HepG2 (cell line): ENCODE measurements at regions of chr2 and their contacts with region 1.

Region 1: DNA sequence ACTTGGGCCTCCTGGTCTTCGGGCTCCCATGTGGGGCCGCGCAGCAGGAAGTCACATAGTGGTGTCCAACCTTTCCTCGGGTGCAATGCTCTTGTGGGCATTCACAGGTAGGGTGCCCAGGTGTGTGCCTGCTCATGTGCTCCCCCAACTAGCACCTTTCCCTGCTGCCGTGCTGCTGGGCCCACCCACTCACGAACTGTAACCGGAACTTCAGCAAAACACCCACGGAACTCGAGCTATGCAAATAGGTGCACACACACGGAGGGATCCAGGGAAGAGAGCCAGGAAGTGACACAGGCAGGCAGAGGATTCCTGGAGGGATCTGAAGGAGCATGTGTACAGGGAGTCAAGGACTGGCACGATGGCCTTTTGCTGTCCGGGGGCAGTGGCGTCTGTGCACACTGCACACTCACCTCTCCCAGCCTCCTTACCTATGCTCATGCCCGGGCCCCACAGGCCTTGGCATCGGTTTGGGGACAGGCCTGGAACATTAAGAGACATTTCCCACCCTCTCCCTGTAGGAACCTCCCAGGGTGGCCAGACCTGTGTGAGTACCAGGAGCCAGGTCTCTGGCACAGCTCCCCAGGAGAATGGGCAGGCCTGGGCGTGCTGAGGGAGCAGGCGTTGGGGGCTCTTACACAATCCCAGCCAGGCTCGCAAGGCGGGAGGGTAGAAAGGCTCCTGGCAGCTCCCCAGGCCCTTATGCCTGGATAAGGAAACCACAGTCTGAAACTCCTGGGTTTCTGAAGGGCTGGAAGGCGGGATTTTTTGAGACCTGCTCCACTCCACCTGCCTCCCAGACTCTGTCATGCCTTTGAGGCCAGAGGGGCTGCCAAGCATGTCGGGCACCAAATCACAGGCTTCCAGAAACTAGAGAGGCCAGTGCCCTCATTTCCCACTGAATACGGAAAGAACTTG is 6.6 kb upstream of the PTMA start:
- DNase-seq: peak; percentile 45
- ATAC-seq: peak; percentile 56
- H3K4me3 ChIP-seq: peak overlapping the region; percentile 32 to 67 (median 33)
- H3K27ac ChIP-seq: peak overlapping the region; percentile 28
- H3K4me1 ChIP-seq: peaks cover 53% of the 10 kb centered on the region
- H3K27me3 ChIP-seq: no peaks in the 10 kb centered on the region
- CTCF ChIP-seq: no peak; the same call in 1 of the 2 replicates
- EP300 ChIP-seq: no peak
- POLR2A ChIP-seq: 0 out of 4 replicates have a peak, but pooled peaks of 1 of the 2 experiments have one; percentile 36
- RAD21 ChIP-seq: no peak

Region 2: GRCh38 chr2:231680992-231681853 is 20.5 kb before region 1 on chr2:
- CTCF ChIA-PET with region 1: interaction called, 7 read pairs
- POLR2A ChIA-PET with region 1: interaction called, 52 read pairs
- in situ Hi-C with region 1: no loop called
- intact Hi-C with region 1: no loop called
- DNase-seq: peak; percentile 87
- ATAC-seq: peak; percentile 83
- H3K4me3 ChIP-seq: peak overlapping the region; percentile 63 to 82 (median 66)
- H3K27ac ChIP-seq: peak overlapping the region; percentile 98
- H3K4me1 ChIP-seq: peaks cover 64% of the 10 kb centered on the region
- H3K27me3 ChIP-seq: peaks cover 0 to 10% of the 10 kb centered on the region in 2 experiments; a peak in 1 of 5 replicates
- CTCF ChIP-seq: peak; percentile 11; the same call in 1 of the 2 replicates
- EP300 ChIP-seq: no peak; a peak in 1 of 4 replicates
- POLR2A ChIP-seq: peak in 1 of 2 experiments; percentile 93; a peak in 2 of 4 replicates
- RAD21 ChIP-seq: peak; percentile 77

Region 3: GRCh38 chr2:231687133-231687852 is 14.4 kb before region 1 on chr2:
- CTCF ChIA-PET with region 1: no interaction called
- POLR2A ChIA-PET with region 1: interaction called, 52 read pairs
- in situ Hi-C with region 1: no loop called
- intact Hi-C with region 1: no loop called
- DNase-seq: peak; percentile 81
- ATAC-seq: peak; percentile 85
- H3K4me3 ChIP-seq: peak overlapping the region in 2 of 3 experiments; percentile 18 to 55; a peak in 2 of 6 replicates
- H3K27ac ChIP-seq: no peak overlapping the region
- H3K4me1 ChIP-seq: peaks cover 53% of the 10 kb centered on the region
- H3K27me3 ChIP-seq: peaks cover 4 to 25% of the 10 kb centered on the region in 2 experiments; a peak in 3 of 5 replicates
- CTCF ChIP-seq: peak; percentile 99
- EP300 ChIP-seq: no peak
- POLR2A ChIP-seq: peak in 1 of 2 experiments; percentile 60; a peak in 2 of 4 replicates
- RAD21 ChIP-seq: peak; percentile 91

Region 4: DNA sequence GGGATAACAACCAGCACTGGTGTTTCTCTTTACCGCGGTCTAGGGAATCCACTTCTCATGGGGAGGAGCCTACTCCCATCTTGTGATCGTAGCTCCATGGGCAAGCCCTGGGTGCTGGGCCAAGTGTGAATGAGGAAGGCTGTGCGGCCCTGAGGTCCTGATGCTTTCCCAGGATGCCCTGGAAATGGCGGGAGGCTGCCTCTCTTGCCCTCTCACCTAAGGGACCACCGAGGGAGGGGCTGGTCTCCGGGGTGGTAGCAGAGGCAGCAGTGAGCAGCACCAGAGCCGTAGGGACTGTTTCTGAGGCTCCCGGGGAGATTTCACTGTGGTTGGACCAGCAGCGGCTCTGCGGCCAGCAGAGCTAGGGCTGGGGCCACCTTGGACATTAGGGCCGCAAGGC is 240.0 kb after region 1 on chr2:
- CTCF ChIA-PET with region 1: no interaction called
- POLR2A ChIA-PET with region 1: no interaction called
- in situ Hi-C with region 1: no loop called
- intact Hi-C with region 1: no loop called
- DNase-seq: no peak
- ATAC-seq: no peak
- H3K4me3 ChIP-seq: no peak overlapping the region
- H3K27ac ChIP-seq: no peak overlapping the region
- H3K4me1 ChIP-seq: no peaks in the 10 kb centered on the region
- H3K27me3 ChIP-seq: peaks cover 5 to 21% of the 10 kb centered on the region in 2 experiments
- CTCF ChIP-seq: no peak
- EP300 ChIP-seq: no peak
- POLR2A ChIP-seq: no peak
- RAD21 ChIP-seq: no peak